B cell (primary cell): ENCODE measurements at regions of chr12 and their contacts with region 1.

Region 1: GRCh38 chr12:55659486-55660385 is 23.0 kb downstream of the OR10P1 start:
- DNase-seq: peak; percentile 57
- ATAC-seq: peak; percentile 56
- H3K4me3 ChIP-seq: no peak overlapping the region
- H3K4me3 Mint-ChIP-seq: no peak overlapping the region
- H3K27ac ChIP-seq: no peak overlapping the region
- H3K27ac Mint-ChIP-seq: no peak overlapping the region
- H3K4me1 ChIP-seq: no peaks in the 10 kb centered on the region
- H3K4me1 Mint-ChIP-seq: peaks cover 2% of the 10 kb centered on the region
- H3K27me3 ChIP-seq: no peaks in the 10 kb centered on the region
- H3K27me3 Mint-ChIP-seq: peaks cover 9% of the 10 kb centered on the region
- CTCF ChIP-seq: peak; percentile 54

Region 2: DNA sequence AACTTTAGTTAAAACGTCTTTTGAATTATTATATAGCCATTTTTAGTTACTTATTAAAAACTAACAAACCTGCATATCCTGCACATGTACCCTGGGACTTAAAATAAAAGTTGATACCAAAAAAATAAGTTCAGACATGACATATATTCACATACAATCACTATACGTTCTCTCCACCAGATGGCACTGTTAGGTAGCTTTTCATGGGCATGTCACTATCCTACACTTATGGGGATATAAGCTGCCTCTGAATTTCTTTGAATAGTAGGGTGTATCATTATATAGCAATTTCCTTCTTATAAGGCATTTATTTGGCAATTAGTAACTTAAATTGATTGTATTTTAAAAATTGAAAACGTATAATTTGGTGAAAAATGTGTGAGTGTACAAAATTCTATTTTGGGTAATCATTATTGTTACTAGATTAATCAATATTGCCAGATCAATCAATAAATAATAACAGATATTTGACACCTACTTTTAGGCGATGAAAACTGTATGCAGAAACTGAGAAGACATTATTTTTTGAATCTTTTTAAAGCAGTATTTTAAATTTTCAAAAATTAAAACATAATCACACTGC is 470.7 kb before region 1 on chr12:
- CTCF ChIA-PET with region 1: interaction called, 32 read pairs
- POLR2A ChIA-PET with region 1: no interaction called
- intact Hi-C with region 1: no loop called
- DNase-seq: peak; percentile 82
- ATAC-seq: peak; percentile 47
- H3K4me3 ChIP-seq: no peak overlapping the region
- H3K4me3 Mint-ChIP-seq: no peak overlapping the region
- H3K27ac ChIP-seq: no peak overlapping the region
- H3K27ac Mint-ChIP-seq: no peak overlapping the region
- H3K4me1 ChIP-seq: no peaks in the 10 kb centered on the region
- H3K4me1 Mint-ChIP-seq: no peaks in the 10 kb centered on the region
- H3K27me3 ChIP-seq: peaks cover 0 to 13% (median 1%) of the 10 kb centered on the region in 4 experiments
- H3K27me3 Mint-ChIP-seq: peaks cover 38% of the 10 kb centered on the region
- CTCF ChIP-seq: peak; percentile 93

Region 3: GRCh38 chr12:55642669-55643068 is 17.1 kb before region 1 on chr12:
- CTCF ChIA-PET with region 1: interaction called, 113 read pairs
- POLR2A ChIA-PET with region 1: no interaction called
- intact Hi-C with region 1: loop called (anchors 1 kb)
- DNase-seq: peak; percentile 62
- ATAC-seq: peak; percentile 18
- H3K4me3 ChIP-seq: peak overlapping the region in 3 of 5 experiments; percentile 8 to 41 (median 26)
- H3K4me3 Mint-ChIP-seq: peak overlapping the region; percentile 69
- H3K27ac ChIP-seq: peak overlapping the region; percentile 19 to 57
- H3K27ac Mint-ChIP-seq: peak overlapping the region; percentile 79
- H3K4me1 ChIP-seq: peaks cover 33 to 39% of the 10 kb centered on the region in 2 donors
- H3K4me1 Mint-ChIP-seq: peaks cover 36% of the 10 kb centered on the region
- H3K27me3 ChIP-seq: peaks cover 0 to 4% (median 1%) of the 10 kb centered on the region in 4 experiments
- H3K27me3 Mint-ChIP-seq: peaks cover 1% of the 10 kb centered on the region
- CTCF ChIP-seq: no peak

Region 4: DNA sequence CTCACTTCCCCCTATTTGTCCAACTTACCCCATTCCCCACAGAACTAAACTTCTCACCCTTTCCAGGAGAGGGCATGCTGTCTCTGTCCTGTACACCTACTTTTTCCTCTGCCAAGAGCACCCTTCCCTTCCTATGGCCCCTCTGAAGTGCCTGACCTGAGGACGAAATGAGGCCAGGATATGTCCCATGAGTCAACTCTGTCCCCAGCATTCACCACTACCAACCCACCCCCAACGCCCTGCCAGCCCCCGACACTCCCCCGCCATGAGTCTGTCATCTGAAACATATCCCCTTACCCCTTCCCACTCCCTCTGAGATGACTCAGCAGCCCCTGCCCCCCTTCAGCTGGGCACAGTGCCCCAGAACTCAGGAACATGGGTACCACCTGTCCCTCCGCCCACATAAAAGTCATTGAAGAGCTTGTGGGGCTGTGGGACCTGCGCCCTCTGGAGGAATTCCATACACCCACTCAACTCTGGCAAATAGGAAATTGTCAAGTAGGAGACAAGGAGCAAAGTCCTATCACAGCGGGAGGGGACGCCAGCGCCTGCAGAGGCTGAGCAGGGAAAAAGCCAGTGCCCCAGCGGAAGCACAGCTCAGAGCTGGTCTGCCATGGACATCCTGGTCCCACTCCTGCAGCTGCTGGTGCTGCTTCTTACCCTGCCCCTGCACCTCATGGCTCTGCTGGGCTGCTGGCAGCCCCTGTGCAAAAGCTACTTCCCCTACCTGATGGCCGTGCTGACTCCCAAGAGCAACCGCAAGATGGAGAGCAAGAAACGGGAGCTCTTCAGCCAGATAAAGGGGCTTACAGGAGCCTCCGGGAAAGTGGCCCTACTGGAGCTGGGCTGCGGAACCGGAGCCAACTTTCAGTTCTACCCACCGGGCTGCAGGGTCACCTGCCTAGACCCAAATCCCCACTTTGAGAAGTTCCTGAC is 21.7 kb after region 1 on chr12:
- CTCF ChIA-PET with region 1: interaction called, 25 read pairs
- POLR2A ChIA-PET with region 1: interaction called, 9 read pairs
- intact Hi-C with region 1: no loop called
- DNase-seq: no peak
- ATAC-seq: peak; percentile 49
- H3K4me3 ChIP-seq: peak overlapping the region in 4 of 5 experiments; percentile 10 to 42 (median 38)
- H3K4me3 Mint-ChIP-seq: peak overlapping the region; percentile 83
- H3K27ac ChIP-seq: no peak overlapping the region
- H3K27ac Mint-ChIP-seq: peak overlapping the region; percentile 76
- H3K4me1 ChIP-seq: peaks cover 23 to 35% of the 10 kb centered on the region in 2 donors
- H3K4me1 Mint-ChIP-seq: peaks cover 31% of the 10 kb centered on the region
- H3K27me3 ChIP-seq: no peaks in the 10 kb centered on the region
- H3K27me3 Mint-ChIP-seq: no peaks in the 10 kb centered on the region
- CTCF ChIP-seq: no peak

Region 5: DNA sequence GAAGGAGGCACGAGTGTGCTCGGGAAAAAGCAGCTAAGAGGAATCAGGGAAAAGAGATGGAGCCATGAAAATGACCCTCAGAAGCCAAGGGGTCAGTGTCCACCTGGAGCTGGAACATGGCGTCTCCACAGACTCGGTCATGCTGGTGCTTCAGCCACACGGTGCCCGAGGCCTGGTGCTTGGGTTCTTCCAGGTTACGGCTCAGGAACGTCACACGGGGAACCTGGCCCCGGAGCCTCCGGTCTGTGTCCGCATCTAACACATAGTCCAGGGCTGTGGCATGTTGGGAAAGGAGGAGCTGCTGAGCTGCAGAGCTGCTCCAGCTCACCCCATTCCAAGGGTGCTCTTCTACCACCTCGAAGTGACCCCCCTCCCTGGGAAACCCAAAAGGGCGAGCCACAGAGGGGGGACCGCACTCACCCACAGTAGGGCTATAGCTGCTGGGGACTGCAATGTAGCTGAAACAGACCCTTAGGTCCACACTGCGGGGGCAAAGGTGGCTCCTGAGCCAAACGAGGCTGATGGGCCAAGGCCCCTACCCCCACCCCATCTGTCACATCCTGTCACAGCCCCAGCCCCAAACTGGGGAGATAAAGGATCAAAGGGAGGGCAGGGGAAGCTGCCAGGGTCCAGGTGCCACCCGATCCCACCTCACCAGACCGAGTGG is 37.2 kb after region 1 on chr12:
- CTCF ChIA-PET with region 1: no interaction called
- POLR2A ChIA-PET with region 1: no interaction called
- intact Hi-C with region 1: no loop called
- DNase-seq: no peak
- ATAC-seq: no peak
- H3K4me3 ChIP-seq: no peak overlapping the region
- H3K4me3 Mint-ChIP-seq: no peak overlapping the region
- H3K27ac ChIP-seq: no peak overlapping the region
- H3K27ac Mint-ChIP-seq: no peak overlapping the region
- H3K4me1 ChIP-seq: no peaks in the 10 kb centered on the region
- H3K4me1 Mint-ChIP-seq: no peaks in the 10 kb centered on the region
- H3K27me3 ChIP-seq: peaks cover 0 to 3% (median 0%) of the 10 kb centered on the region in 4 experiments
- H3K27me3 Mint-ChIP-seq: no peaks in the 10 kb centered on the region
- CTCF ChIP-seq: no peak

Region 6: GRCh38 chr12:55715833-55716581 is 56.3 kb after region 1 on chr12 and contains the start of gene BLOC1S1:
- CTCF ChIA-PET with region 1: interaction called, 16 read pairs
- POLR2A ChIA-PET with region 1: interaction called, 3 read pairs
- intact Hi-C with region 1: no loop called
- DNase-seq: peak; percentile 95
- ATAC-seq: peak; percentile 95
- H3K4me3 ChIP-seq: peak within 1 kb of the TSS; percentile 86 to 98 (median 97)
- H3K4me3 Mint-ChIP-seq: peak within 1 kb of the TSS; percentile 98
- H3K27ac ChIP-seq: peak within 1 kb of the TSS; percentile 81 to 84
- H3K27ac Mint-ChIP-seq: peak within 1 kb of the TSS; percentile 99
- H3K4me1 ChIP-seq: peaks cover 16 to 30% of the 10 kb centered on the region in 2 donors
- H3K4me1 Mint-ChIP-seq: peaks cover 38% of the 10 kb centered on the region
- H3K27me3 ChIP-seq: no peaks in the 10 kb centered on the region
- H3K27me3 Mint-ChIP-seq: no peaks in the 10 kb centered on the region
- CTCF ChIP-seq: no peak
- total RNA-seq, gene BLOC1S1: 67.1 and 71.1 TPM in 2 replicates